B cell (primary cell): ENCODE measurements at regions of chr4 and their contacts with region 1.

Region 1: GRCh38 chr4:153083447-153083947 is 120.7 kb upstream of the TRIM2 start:
- DNase-seq: peak; percentile 79
- ATAC-seq: peak; percentile 55
- H3K4me3 ChIP-seq: no peak overlapping the region
- H3K4me3 Mint-ChIP-seq: peak overlapping the region; percentile 72
- H3K27ac ChIP-seq: no peak overlapping the region
- H3K27ac Mint-ChIP-seq: peak overlapping the region; percentile 47
- H3K4me1 ChIP-seq: peaks cover 25 to 32% of the 10 kb centered on the region in 2 donors
- H3K4me1 Mint-ChIP-seq: peaks cover 26% of the 10 kb centered on the region
- H3K27me3 ChIP-seq: no peaks in the 10 kb centered on the region
- H3K27me3 Mint-ChIP-seq: peaks cover 3% of the 10 kb centered on the region
- CTCF ChIP-seq: peak; percentile 76

Region 2: GRCh38 chr4:152408514-152409327 is 674.8 kb before region 1 on chr4:
- CTCF ChIA-PET with region 1: interaction called, 5 read pairs
- POLR2A ChIA-PET with region 1: no interaction called
- intact Hi-C with region 1: loop called (anchors 5 kb)
- DNase-seq: peak; percentile 59
- ATAC-seq: no peak
- H3K4me3 ChIP-seq: no peak overlapping the region
- H3K4me3 Mint-ChIP-seq: no peak overlapping the region
- H3K27ac ChIP-seq: no peak overlapping the region
- H3K27ac Mint-ChIP-seq: no peak overlapping the region
- H3K4me1 ChIP-seq: no peaks in the 10 kb centered on the region
- H3K4me1 Mint-ChIP-seq: peaks cover 4% of the 10 kb centered on the region
- H3K27me3 ChIP-seq: no peaks in the 10 kb centered on the region
- H3K27me3 Mint-ChIP-seq: no peaks in the 10 kb centered on the region
- CTCF ChIP-seq: peak; percentile 71

Region 3: GRCh38 chr4:152850377-152850776 is 233.1 kb before region 1 on chr4:
- CTCF ChIA-PET with region 1: interaction called, 167 read pairs
- POLR2A ChIA-PET with region 1: no interaction called
- intact Hi-C with region 1: loop called (anchors 1 kb)
- DNase-seq: peak; percentile 77
- ATAC-seq: peak; percentile 84
- H3K4me3 ChIP-seq: peak overlapping the region in 4 of 5 experiments; percentile 7 to 45 (median 19)
- H3K4me3 Mint-ChIP-seq: peak overlapping the region; percentile 63
- H3K27ac ChIP-seq: peak overlapping the region; percentile 46 to 86
- H3K27ac Mint-ChIP-seq: peak overlapping the region; percentile 39
- H3K4me1 ChIP-seq: peaks cover 21 to 23% of the 10 kb centered on the region in 2 donors
- H3K4me1 Mint-ChIP-seq: peaks cover 26% of the 10 kb centered on the region
- H3K27me3 ChIP-seq: no peaks in the 10 kb centered on the region
- H3K27me3 Mint-ChIP-seq: no peaks in the 10 kb centered on the region
- CTCF ChIP-seq: no peak

Region 4: DNA sequence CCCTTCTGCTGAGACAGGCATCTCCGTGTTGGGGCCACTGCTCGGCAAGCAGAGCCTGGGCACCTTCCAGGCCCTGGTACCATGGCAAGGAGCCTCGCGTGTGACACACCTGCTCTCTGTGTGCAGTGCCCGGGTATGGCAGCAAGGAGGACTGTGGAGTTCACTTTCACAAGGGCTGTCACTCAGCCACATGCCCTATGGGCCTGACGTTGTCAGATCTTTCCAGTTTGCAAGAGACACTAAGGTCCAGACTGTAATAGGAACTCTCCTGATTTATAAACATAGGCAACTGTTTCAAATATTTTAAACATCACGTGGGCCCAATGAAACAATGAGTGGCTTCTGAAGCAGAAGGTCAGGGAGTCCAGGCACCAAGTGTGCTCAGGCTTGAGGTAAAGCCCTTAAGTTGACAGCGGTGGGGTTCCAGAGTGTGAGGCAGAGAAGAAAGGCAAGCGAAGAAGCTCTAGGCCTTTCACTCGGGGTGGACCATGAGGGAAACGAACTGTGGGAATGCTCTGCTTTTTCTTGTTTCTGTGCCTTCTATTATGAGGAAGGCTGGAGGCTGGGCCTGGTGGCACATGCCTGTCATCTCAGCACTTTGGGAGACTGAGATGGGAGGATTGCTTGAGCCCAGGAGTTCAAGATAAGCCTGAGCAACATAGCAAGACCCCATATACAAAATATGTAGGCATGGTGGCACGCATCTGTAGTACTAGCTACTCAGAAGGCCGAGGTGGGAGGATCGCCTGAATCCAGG is 12.1 kb after region 1 on chr4:
- CTCF ChIA-PET with region 1: interaction called, 13 read pairs
- POLR2A ChIA-PET with region 1: no interaction called
- intact Hi-C with region 1: no loop called
- DNase-seq: no peak
- ATAC-seq: no peak
- H3K4me3 ChIP-seq: no peak overlapping the region
- H3K4me3 Mint-ChIP-seq: no peak overlapping the region
- H3K27ac ChIP-seq: no peak overlapping the region
- H3K27ac Mint-ChIP-seq: no peak overlapping the region
- H3K4me1 ChIP-seq: no peaks in the 10 kb centered on the region
- H3K4me1 Mint-ChIP-seq: no peaks in the 10 kb centered on the region
- H3K27me3 ChIP-seq: no peaks in the 10 kb centered on the region
- H3K27me3 Mint-ChIP-seq: no peaks in the 10 kb centered on the region
- CTCF ChIP-seq: no peak

Region 5: DNA sequence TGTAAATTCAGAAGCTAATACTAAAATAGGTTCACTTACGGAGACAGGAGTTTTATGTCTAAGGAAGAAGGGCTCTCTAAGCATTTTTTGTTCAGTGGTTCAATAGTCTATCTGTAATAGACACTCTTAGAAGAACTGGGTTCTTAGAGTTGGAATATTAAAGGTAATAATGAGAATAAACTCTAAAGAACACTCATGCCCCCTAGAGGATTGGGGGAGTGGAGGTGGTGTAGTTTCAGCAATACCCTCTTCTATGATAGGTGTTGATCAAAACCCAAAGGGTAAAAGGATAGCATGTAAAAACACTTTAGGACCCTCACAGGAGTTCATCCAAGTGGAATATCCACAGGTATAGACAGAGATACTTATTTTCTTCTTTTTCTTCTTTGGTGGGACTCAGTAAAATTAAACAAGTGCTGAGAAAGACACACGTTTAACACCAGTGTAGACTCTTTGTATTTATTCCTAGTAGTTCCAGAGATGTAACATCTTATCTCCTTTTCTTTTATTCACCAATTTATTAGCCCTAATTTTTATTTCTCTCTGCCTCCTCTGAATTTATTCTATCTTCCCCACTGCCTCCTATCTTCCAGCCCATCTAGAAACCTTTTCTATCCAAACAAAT is 235.3 kb after region 1 on chr4:
- CTCF ChIA-PET with region 1: interaction called, 8 read pairs
- POLR2A ChIA-PET with region 1: no interaction called
- intact Hi-C with region 1: loop called (anchors 1 kb)
- DNase-seq: peak; percentile 57
- ATAC-seq: no peak
- H3K4me3 ChIP-seq: no peak overlapping the region
- H3K4me3 Mint-ChIP-seq: no peak overlapping the region
- H3K27ac ChIP-seq: no peak overlapping the region
- H3K27ac Mint-ChIP-seq: no peak overlapping the region
- H3K4me1 ChIP-seq: no peaks in the 10 kb centered on the region
- H3K4me1 Mint-ChIP-seq: no peaks in the 10 kb centered on the region
- H3K27me3 ChIP-seq: no peaks in the 10 kb centered on the region
- H3K27me3 Mint-ChIP-seq: no peaks in the 10 kb centered on the region
- CTCF ChIP-seq: peak; percentile 78